Natural killer cell (primary cell): ENCODE measurements at regions of chr1 and their contacts with region 1.

Region 1: GRCh38 chr1:104132382-104132973 is 382.8 kb downstream of the AMY1C start:
- DNase-seq: no peak
- ATAC-seq: peak in 2 of 3 donors; percentile 49 to 51
- H3K4me3 ChIP-seq: no peak overlapping the region
- H3K4me3 Mint-ChIP-seq: no peak overlapping the region
- H3K27ac ChIP-seq: no peak overlapping the region
- H3K27ac Mint-ChIP-seq: no peak overlapping the region
- H3K4me1 ChIP-seq: no peaks in the 10 kb centered on the region
- H3K4me1 Mint-ChIP-seq: no peaks in the 10 kb centered on the region
- H3K27me3 ChIP-seq: no peaks in the 10 kb centered on the region
- H3K27me3 Mint-ChIP-seq: no peaks in the 10 kb centered on the region
- CTCF ChIP-seq: peak; percentile 51

Region 2: GRCh38 chr1:103788377-103788776 is 344.1 kb before region 1 on chr1:
- intact Hi-C with region 1: loop called (anchors 5 kb)
- DNase-seq: no peak
- ATAC-seq: no peak
- H3K4me3 ChIP-seq: no peak overlapping the region
- H3K4me3 Mint-ChIP-seq: no peak overlapping the region
- H3K27ac ChIP-seq: no peak overlapping the region
- H3K27ac Mint-ChIP-seq: no peak overlapping the region
- H3K4me1 ChIP-seq: no peaks in the 10 kb centered on the region
- H3K4me1 Mint-ChIP-seq: no peaks in the 10 kb centered on the region
- H3K27me3 ChIP-seq: no peaks in the 10 kb centered on the region
- H3K27me3 Mint-ChIP-seq: no peaks in the 10 kb centered on the region
- CTCF ChIP-seq: no peak

Region 3: DNA sequence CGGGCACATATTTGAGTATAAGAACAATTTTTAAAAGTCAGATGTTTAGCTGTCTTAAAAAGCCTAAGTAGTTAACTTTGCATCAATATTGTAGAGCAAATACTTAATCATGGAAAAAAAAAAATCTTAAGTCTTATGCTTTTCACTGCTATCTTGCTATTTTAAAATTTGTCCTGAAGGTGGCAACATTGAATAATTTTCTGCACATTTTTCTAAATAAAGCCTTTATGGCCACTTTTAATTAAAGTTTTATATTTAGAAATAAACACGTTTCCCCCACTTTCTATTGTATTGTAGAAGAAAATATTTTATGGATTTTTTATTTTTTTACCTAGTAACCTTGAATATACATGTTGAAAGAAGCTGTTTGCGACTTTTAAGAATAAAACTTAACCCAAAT is 184.0 kb before region 1 on chr1:
- intact Hi-C with region 1: loop called (anchors 1 kb)
- DNase-seq: no peak
- ATAC-seq: no peak
- H3K4me3 ChIP-seq: no peak overlapping the region
- H3K4me3 Mint-ChIP-seq: no peak overlapping the region
- H3K27ac ChIP-seq: no peak overlapping the region
- H3K27ac Mint-ChIP-seq: no peak overlapping the region
- H3K4me1 ChIP-seq: no peaks in the 10 kb centered on the region
- H3K4me1 Mint-ChIP-seq: no peaks in the 10 kb centered on the region
- H3K27me3 ChIP-seq: no peaks in the 10 kb centered on the region
- H3K27me3 Mint-ChIP-seq: no peaks in the 10 kb centered on the region
- CTCF ChIP-seq: peak; percentile 52

Region 4: DNA sequence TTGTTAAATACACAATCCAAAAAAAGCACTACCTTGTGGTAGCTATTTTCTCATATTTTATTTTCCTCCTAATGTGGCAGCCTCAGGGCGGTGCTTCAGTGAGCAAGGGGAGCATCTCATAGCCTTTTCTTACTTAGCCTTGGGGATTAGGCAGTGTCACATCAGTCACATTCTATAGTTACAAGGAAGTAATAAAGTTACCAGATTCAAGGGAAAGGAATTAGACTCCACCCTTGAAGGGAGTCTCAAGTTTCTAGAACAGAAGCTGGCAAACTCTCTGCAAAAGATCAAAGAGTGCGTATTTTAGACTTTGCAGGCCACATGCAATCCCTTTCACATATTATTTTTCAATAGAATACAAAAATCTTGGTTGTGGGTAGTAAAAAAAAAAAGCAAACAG is 32.4 kb before region 1 on chr1:
- intact Hi-C with region 1: no loop called
- DNase-seq: no peak
- ATAC-seq: no peak
- H3K4me3 ChIP-seq: no peak overlapping the region
- H3K4me3 Mint-ChIP-seq: no peak overlapping the region
- H3K27ac ChIP-seq: no peak overlapping the region
- H3K27ac Mint-ChIP-seq: no peak overlapping the region
- H3K4me1 ChIP-seq: no peaks in the 10 kb centered on the region
- H3K4me1 Mint-ChIP-seq: no peaks in the 10 kb centered on the region
- H3K27me3 ChIP-seq: no peaks in the 10 kb centered on the region
- H3K27me3 Mint-ChIP-seq: no peaks in the 10 kb centered on the region
- CTCF ChIP-seq: no peak